Activated CD8-positive, alpha-beta T cell treated with anti-CD3 and anti-CD28 coated beads for 36 hours (primary cell): ENCODE measurements at regions of chr2 and their contacts with region 1.

Region 1: GRCh38 chr2:73985308-73986084 is 786 bp downstream of the TET3 start:
- DNase-seq: peak; percentile 91
- ATAC-seq: peak; percentile 52
- H3K4me3 Mint-ChIP-seq: peak overlapping the region; percentile 87
- H3K27ac Mint-ChIP-seq: peak overlapping the region; percentile 95
- H3K4me1 Mint-ChIP-seq: peaks cover 60% of the 10 kb centered on the region
- H3K27me3 Mint-ChIP-seq: no peaks in the 10 kb centered on the region
- CTCF ChIP-seq: no peak

Region 2: GRCh38 chr2:73907840-73908452 is 77.5 kb before region 1 on chr2:
- CTCF ChIA-PET with region 1: interaction called, 22 read pairs
- POLR2A ChIA-PET with region 1: interaction called, 4 read pairs
- intact Hi-C with region 1: no loop called
- DNase-seq: peak; percentile 84
- ATAC-seq: peak; percentile 95
- H3K4me3 Mint-ChIP-seq: no peak overlapping the region
- H3K27ac Mint-ChIP-seq: peak overlapping the region; percentile 75
- H3K4me1 Mint-ChIP-seq: peaks cover 10% of the 10 kb centered on the region
- H3K27me3 Mint-ChIP-seq: no peaks in the 10 kb centered on the region
- CTCF ChIP-seq: peak; percentile 48

Region 3: DNA sequence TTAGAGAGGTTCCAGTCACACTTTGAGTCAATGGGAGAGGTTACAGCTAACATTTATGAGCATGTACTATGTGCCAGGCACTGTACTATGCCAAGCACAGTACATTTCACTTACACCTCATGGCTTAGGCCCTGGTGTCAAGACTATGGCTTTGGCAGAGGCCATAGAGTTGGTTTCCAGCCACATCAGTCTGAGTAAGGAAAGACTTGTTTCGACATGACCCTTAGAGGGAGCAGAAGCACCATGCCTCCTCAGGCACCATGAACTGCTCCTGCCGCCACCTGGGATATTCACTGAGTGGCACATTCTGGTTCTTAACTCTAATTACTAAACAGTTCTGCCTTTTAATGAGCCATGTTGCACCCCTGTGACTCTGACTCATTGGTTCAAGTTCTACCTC is 46.1 kb before region 1 on chr2:
- CTCF ChIA-PET with region 1: interaction called, 9 read pairs
- POLR2A ChIA-PET with region 1: interaction called, 7 read pairs
- intact Hi-C with region 1: loop called (anchors 2 kb)
- DNase-seq: peak; percentile 44
- ATAC-seq: peak; percentile 72
- H3K4me3 Mint-ChIP-seq: no peak overlapping the region
- H3K27ac Mint-ChIP-seq: peak overlapping the region; percentile 61
- H3K4me1 Mint-ChIP-seq: peaks cover 79% of the 10 kb centered on the region
- H3K27me3 Mint-ChIP-seq: no peaks in the 10 kb centered on the region
- CTCF ChIP-seq: no peak

Region 4: GRCh38 chr2:73970850-73971471 is 14.5 kb before region 1 on chr2:
- CTCF ChIA-PET with region 1: interaction called, 5 read pairs
- POLR2A ChIA-PET with region 1: interaction called, 12 read pairs
- intact Hi-C with region 1: no loop called
- DNase-seq: peak; percentile 75
- ATAC-seq: peak; percentile 87
- H3K4me3 Mint-ChIP-seq: peak overlapping the region; percentile 69
- H3K27ac Mint-ChIP-seq: peak overlapping the region; percentile 86
- H3K4me1 Mint-ChIP-seq: peaks cover 62% of the 10 kb centered on the region
- H3K27me3 Mint-ChIP-seq: no peaks in the 10 kb centered on the region
- CTCF ChIP-seq: no peak

Region 5: DNA sequence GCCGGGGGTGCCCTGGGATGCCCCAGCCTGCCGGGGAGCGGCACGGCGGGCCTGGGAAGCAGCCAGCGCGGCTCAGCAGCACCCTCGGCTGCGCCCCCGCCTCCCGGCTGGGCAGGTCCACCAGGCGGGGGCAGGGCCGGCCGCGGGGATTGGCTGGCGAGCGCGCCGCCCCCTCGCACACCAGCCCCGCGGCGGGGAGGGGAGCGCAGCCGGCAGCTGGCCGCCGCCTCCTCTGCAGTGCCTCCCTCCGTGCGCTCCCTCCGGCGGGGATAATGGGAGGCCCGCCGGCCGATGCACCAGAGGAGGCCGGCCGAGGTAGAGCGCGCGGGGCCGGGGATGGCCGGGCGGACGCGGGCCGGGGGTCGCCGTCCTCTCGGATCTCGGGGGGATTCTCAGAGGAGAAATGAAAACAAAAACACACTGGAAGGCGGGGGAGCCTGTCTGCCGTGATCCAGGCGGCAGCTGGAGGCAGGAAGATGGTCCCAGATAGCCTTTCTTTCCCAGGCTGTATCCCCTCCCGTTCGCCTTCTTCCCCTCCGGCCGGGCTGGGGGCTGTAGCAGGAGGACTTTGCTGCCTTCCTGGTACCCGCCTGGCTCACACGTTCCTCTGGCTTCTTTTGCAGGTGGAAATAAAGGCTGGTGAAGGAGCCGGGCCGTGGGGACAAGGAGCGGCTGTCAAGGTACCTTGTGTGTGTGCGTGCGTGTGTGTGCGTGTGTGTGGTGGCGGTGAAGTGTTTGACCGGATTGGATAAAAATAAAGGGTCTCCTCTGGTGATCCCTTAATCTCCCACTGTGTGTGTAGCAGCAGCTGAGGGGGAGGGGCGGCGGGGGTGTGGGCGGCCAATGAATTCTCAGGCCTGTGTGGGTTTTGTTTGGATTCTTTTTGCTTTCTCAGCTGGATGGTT is 17.2 kb after region 1 on chr2:
- CTCF ChIA-PET with region 1: interaction called, 18 read pairs
- POLR2A ChIA-PET with region 1: interaction called, 38 read pairs
- intact Hi-C with region 1: no loop called
- DNase-seq: peak; percentile 82
- ATAC-seq: peak; percentile 86
- H3K4me3 Mint-ChIP-seq: peak overlapping the region; percentile 76
- H3K27ac Mint-ChIP-seq: peak overlapping the region; percentile 58
- H3K4me1 Mint-ChIP-seq: peaks cover 82% of the 10 kb centered on the region
- H3K27me3 Mint-ChIP-seq: no peaks in the 10 kb centered on the region
- CTCF ChIP-seq: no peak

Region 6: DNA sequence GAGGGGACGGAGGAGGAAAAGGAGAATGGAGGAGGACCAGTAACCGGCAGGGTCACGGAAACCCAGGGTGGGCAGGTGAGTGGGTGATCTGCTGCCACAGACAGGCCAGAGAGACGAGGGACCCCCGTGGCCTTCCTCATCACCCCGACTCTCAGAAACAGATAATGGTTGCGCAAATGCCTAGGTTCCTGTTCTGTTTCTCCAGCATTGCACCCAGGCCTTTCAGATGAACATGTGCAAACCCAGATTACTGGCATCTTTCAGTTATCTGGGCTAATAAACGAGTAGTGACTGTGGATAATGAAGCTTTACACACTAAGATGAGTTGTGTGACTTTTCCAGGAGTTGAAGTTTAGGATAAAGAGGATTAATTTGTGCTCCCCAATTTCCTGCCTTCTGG is 45.7 kb after region 1 on chr2:
- CTCF ChIA-PET with region 1: interaction called, 5 read pairs
- POLR2A ChIA-PET with region 1: interaction called, 3 read pairs
- intact Hi-C with region 1: loop called (anchors 5 kb)
- DNase-seq: no peak
- ATAC-seq: no peak
- H3K4me3 Mint-ChIP-seq: peak overlapping the region; percentile 80
- H3K27ac Mint-ChIP-seq: peak overlapping the region; percentile 96
- H3K4me1 Mint-ChIP-seq: peaks cover 76% of the 10 kb centered on the region
- H3K27me3 Mint-ChIP-seq: no peaks in the 10 kb centered on the region
- CTCF ChIP-seq: no peak